Right ventricle myocardium superior (tissue), 1 donor: ENCODE measurements at regions of chr12 and their contacts with region 1.

Region 1: DNA sequence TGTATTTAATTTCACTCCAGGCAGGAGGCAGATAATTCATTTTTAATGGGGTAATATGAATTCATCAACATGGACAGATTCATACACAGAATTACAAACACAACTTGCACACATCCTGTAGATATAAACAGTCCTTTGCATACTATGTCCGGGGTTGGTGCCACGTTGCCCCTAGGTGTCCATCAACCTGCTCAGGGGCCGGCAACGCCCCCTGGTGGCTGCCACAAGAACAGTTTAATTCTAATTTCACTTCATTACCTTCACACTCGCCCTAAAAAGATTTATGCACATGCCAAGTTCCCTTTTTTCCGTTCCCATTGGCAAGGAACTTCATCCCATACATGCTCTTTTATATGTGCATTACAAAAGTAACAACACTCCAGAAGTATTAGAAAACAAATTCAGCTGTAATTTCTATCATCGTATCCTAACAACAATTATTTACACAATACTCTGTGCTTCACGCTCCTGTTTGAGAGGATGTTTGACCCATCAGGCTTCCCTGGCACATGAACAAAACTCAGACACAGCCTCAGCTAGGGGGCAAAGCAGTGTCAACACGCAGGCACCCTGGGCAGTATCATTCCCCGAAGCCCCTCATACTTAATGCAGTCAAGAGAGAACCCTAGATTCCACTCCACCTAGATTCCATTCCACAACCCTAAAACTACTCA is 15.5 kb downstream of the MANSC1 start:
- DNase-seq: peak; percentile 72
- ATAC-seq: peak; percentile 78

Region 2: DNA sequence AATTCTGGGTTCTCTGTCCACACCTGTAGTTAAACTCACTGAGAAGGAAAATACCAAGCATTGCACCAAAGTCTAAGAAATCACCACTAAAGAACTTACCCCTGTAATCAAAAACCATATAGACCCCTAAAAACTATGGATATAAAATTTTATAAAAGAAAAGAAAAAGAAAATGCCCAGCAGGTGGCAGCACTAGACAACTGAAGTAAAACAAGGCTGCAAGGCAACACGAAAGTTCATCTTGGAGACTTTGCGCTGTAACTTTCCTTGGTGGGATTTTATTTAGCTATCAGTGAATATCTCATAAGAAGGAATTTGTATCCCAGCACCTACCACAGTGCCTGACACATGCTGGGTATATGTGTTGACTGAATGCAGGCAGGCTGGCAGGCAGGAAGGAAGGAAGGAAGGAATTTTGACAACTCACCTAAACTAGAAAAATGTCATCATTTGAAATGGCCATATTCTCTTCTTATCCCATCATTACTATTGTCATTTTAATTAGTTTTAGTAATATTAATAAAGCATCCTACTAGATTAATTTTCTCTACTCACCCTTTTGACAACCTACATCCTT is 753.2 kb before region 1 on chr12:
- intact Hi-C with region 1: loop called (anchors 10 kb)
- DNase-seq: no peak
- ATAC-seq: peak; percentile 65

Region 3: GRCh38 chr12:12081836-12082497 is 252.5 kb before region 1 on chr12:
- intact Hi-C with region 1: loop called (anchors 5 kb)
- DNase-seq: no peak
- ATAC-seq: peak; percentile 82

Region 4: DNA sequence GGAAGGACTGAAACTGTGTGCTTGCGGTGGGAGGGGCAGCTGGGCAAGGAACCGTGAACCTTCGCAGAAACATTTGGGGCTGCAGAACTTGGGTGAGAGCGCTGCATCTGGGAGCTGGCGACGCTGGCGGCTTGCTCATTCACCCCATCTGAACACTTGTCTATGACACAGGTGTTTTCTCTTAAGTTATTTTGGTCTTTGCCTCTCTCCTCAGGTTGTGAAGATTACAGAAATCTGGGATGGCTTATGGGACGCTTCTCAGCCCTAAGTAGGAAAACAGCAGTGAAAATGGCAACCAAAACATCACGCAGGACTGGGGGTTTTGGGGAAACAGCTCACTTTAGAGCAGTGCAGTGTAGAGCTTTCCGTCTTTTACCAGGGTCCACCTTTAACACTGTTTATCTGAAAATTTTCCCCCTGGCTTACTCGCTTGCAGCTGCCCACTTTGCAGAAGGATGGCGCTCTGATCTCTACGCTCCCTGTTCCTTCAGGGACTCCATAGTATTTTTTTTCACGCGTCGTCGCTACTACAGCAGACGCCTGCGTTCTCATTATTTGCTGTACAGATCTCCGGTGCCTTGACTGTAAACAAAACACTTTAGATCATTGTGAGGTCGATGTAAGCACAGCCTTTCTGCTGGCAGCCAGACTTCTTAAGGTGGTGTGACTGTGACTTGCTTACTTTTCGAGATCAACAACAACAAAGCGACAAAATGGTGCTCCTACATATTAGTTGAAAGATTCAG is 379.9 kb after region 1 on chr12:
- intact Hi-C with region 1: no loop called
- DNase-seq: peak; percentile 56
- ATAC-seq: no peak